ENCODE measurements at regions of chr12 and their contacts with region 1.

Region 1: DNA sequence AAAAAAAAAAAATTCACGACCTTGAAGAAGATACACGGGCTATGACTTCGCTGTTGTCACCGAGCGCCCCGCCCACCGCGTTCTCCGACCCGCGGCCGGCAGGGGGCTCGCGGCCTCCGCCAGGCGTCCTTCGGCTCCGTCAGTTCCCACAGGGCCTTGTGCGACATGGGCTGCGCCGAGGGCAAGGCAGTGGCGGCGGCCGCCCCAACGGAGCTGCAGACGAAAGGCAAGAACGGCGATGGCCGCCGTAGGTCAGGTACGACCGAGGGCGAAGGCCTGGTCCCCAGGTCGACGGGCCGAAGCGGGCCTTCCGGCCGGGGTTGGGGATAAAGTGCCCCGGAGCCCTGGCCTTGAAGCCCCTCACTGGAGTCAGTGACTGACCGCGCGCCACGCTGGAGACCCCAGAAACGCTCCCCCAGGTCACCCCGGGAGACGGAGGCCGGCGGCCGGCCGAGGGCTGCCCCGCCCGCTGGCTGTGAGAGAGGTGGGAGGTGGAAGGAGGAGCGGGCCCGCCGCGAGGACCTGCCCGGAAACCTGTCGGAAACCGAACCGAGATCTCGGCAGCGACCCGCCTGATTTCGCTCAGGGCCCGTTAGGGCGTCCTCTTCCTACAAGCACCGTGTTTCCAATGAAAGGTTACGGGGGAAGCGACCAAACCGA is at the start of gene TXNRD1:
- DNase-seq: peak; percentile 92
- ATAC-seq: peak; percentile 95
- total RNA-seq, gene TXNRD1: 98.9 TPM

Region 2: GRCh38 chr12:104286538-104287482 is 71.0 kb after region 1 on chr12:
- intact Hi-C with region 1: loop called (anchors 1 kb)
- DNase-seq: peak; percentile 96
- ATAC-seq: peak; percentile 95

Region 3: GRCh38 chr12:104358347-104359003 is 142.7 kb after region 1 on chr12:
- intact Hi-C with region 1: loop called (anchors 5 kb)
- DNase-seq: peak; percentile 59
- ATAC-seq: peak; percentile 85